ENCODE measurements at regions of chr2 and their contacts with region 1.

Region 1: GRCh38 chr2:68244456-68244855 is 7.9 kb downstream of the PPP3R1 start:
- DNase-seq: no peak
- H3K4me3 ChIP-seq: no peak overlapping the region
- H3K27ac ChIP-seq: no peak overlapping the region
- H3K4me1 ChIP-seq: peaks cover 10% of the 10 kb centered on the region
- H3K27me3 ChIP-seq: no peaks in the 10 kb centered on the region
- CTCF ChIP-seq: no peak
- POLR2A ChIP-seq: no peak

Region 2: DNA sequence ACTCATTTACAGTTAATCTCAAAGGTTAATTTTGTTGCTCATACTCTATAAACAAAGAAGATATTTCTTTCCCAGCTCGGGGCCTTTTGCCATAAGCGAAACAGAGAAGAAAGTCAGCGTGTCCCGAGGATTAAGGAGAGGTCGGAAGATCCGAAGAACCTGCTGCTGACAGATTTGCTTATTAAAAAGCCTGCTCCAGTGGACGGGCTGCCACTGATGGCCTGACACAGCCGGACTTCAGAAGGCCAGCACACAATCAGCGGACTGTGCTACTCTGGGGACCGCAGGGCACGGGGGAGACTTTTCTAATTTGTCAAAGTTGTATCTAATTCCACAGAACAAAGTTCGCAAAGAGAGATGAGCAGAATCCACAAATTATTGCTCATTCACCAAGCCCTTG is 532.0 kb before region 1 on chr2:
- intact Hi-C with region 1: no loop called
- DNase-seq: no peak
- H3K4me3 ChIP-seq: no peak overlapping the region
- H3K27ac ChIP-seq: no peak overlapping the region
- H3K4me1 ChIP-seq: no peaks in the 10 kb centered on the region
- H3K27me3 ChIP-seq: no peaks in the 10 kb centered on the region
- CTCF ChIP-seq: no peak
- POLR2A ChIP-seq: no peak

Region 3: GRCh38 chr2:68103030-68103708 is 141.3 kb before region 1 on chr2:
- intact Hi-C with region 1: no loop called
- DNase-seq: no peak
- H3K4me3 ChIP-seq: no peak overlapping the region
- H3K27ac ChIP-seq: no peak overlapping the region
- H3K4me1 ChIP-seq: peaks cover 8% of the 10 kb centered on the region
- H3K27me3 ChIP-seq: no peaks in the 10 kb centered on the region
- CTCF ChIP-seq: no peak
- POLR2A ChIP-seq: no peak

Region 4: DNA sequence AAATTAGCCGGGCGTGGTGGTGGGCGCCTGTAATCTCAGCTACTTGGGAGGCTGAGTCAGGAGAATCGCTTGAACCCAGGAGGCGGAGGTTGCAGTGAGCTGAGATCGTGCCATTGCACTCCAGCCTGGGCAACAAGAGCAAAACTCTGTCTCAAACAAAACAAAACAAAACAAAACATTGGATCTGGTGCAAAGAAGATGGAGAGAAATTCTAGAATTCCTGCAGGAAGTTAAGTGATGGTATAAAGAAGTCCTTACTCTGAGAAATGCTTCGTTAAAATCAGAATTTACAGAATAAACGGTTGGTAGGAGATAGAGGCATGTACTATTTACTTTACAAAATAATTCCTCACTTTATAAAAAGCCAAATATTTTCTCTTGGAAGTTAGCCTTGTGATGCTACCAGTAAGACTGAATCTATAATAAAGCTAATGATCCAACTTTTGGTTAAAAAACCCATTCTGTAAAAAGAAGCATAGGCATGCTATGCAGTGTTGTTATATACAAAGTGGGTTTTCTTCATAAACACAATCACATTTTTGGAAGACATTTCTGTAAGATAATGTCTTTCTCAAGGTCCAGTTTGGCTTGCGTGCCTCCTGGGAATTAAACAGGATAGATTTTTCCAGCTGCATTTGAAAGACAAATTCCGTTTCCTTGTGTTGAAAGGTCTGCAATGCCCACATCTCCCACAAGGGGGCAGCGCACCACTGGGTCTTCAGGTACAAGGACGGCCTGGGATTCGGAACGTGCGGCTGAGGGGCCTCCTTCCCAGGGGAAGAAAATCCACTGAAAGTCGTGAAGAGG is 122.4 kb before region 1 on chr2:
- intact Hi-C with region 1: loop called (anchors 10 kb)
- DNase-seq: peak; percentile 96
- H3K4me3 ChIP-seq: no peak overlapping the region
- H3K27ac ChIP-seq: no peak overlapping the region
- H3K4me1 ChIP-seq: peaks cover 6% of the 10 kb centered on the region
- H3K27me3 ChIP-seq: no peaks in the 10 kb centered on the region
- CTCF ChIP-seq: peak; percentile 90 to 95 (median 93)
- POLR2A ChIP-seq: no peak

Region 5: DNA sequence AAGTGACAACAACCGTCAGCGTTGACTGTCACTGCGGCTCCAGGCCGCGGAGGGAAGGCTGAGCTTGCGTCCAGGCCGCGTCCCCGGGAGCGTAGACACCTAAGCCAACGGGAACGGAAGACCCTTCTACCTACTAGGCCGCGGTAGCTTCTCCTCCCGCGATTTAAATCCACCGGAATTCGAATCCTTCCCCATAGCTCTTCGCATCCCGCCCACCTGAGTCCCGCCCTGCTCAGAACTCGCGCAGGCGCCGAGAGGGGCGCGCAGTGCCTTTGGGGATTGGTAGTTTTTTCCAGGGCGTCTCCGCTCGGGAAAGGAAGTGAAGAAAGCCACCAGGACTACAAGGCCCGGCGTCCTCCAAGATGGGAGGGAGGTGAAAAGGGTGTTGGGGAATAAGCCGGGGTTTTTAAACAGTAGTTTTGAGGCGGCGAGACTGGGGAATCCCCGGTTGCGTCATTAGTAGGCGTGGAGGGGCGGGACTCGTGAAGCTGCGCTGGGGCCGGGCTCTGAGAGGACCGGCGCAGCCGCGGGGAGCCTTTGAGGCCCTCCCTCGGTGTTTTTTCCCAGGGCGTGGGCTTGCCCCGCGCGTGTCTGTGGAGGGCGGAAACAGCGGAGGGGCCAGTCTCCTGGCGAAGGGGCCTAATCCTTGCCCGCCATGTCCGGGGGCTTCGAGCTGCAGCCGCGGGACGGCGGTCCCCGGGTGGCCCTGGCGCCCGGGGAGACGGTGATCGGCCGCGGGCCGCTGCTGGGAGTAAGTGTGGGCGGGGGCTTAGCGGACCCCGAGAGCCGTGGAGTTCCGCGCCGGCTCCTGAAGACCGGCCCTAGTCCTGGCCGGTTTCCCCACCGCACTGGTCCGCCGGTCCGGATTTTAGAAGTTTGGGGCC is 222.9 kb after region 1 on chr2 and contains the starts of genes APLF and FBXO48:
- intact Hi-C with region 1: no loop called
- DNase-seq: peak; percentile 99
- H3K4me3 ChIP-seq: peak within 1 kb of the TSS; percentile 76 to 85
- H3K27ac ChIP-seq: peak within 1 kb of the TSS; percentile 79 to 92
- H3K4me1 ChIP-seq: peaks cover 6% of the 10 kb centered on the region
- H3K27me3 ChIP-seq: no peaks in the 10 kb centered on the region
- CTCF ChIP-seq: no peak
- POLR2A ChIP-seq: peak; percentile 55
- total RNA-seq, gene APLF: 14.7 to 21.7 TPM
- total RNA-seq, gene FBXO48: 1.2 to 2.4 TPM

Measured in testis (tissue), 5 donors.